ENCODE measurements at regions of chr19 and their contacts with region 1.

Region 1: DNA sequence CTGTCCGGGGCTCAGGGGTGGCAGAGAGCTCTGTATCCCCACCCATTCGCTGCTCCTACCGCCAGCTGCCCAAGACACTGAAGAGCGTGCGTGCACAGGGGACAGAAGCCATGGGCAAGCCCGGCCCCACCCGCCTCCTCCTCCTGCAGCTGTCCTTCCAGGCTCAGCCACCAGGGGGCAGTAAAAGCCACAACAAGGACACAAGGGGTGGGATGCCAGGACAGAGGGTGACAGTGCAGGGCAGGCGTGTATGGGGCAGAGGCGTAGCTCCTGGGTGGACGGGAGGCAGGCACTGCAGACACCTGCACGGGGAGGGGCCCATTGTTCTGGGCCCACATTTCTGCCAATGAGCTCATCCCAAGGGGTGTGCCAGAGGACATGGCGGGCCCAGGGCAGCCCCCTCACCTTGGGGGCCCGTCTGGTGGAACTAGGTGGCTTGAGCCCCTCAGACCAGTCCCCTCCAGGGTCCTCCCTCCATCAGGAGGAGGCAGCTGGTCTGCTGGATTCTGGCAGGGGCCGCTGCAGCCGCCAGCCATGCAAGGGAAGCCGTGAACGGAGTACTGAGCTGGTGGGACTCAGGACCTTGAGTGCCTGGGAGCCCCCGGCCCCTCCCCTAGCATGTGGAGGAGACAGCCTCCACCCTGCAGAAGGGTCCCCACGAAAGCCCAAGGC is 61.1 kb downstream of the MLLT1 start:
- DNase-seq: peak; percentile 51
- ATAC-seq: peak; percentile 89
- H3K4me3 ChIP-seq: no peak overlapping the region
- H3K27ac ChIP-seq: no peak overlapping the region
- H3K4me1 ChIP-seq: peaks cover 0 to 8% of the 10 kb centered on the region in 2 experiments; a peak in 1 of 4 replicates
- H3K27me3 ChIP-seq: no peaks in the 10 kb centered on the region
- CTCF ChIP-seq: peak; percentile 78 to 95 (median 88); a peak in 5 of 6 replicates
- POLR2A ChIP-seq: no peak
- RAD21 ChIP-seq: peak; percentile 82

Region 2: GRCh38 chr19:5967994-5968430 is 250.6 kb before region 1 on chr19:
- CTCF ChIA-PET with region 1: no interaction called
- POLR2A ChIA-PET with region 1: no interaction called
- RAD21 ChIA-PET with region 1: no interaction called
- intact Hi-C with region 1: no loop called
- DNase-seq: peak; percentile 50
- ATAC-seq: peak; percentile 88
- H3K4me3 ChIP-seq: no peak overlapping the region
- H3K27ac ChIP-seq: peak overlapping the region; percentile 45
- H3K4me1 ChIP-seq: peaks cover 0 to 12% of the 10 kb centered on the region in 2 experiments; a peak in 2 of 4 replicates
- H3K27me3 ChIP-seq: no peaks in the 10 kb centered on the region
- CTCF ChIP-seq: peak; percentile 56 to 89 (median 86)
- POLR2A ChIP-seq: no peak
- RAD21 ChIP-seq: peak; percentile 63

Region 3: DNA sequence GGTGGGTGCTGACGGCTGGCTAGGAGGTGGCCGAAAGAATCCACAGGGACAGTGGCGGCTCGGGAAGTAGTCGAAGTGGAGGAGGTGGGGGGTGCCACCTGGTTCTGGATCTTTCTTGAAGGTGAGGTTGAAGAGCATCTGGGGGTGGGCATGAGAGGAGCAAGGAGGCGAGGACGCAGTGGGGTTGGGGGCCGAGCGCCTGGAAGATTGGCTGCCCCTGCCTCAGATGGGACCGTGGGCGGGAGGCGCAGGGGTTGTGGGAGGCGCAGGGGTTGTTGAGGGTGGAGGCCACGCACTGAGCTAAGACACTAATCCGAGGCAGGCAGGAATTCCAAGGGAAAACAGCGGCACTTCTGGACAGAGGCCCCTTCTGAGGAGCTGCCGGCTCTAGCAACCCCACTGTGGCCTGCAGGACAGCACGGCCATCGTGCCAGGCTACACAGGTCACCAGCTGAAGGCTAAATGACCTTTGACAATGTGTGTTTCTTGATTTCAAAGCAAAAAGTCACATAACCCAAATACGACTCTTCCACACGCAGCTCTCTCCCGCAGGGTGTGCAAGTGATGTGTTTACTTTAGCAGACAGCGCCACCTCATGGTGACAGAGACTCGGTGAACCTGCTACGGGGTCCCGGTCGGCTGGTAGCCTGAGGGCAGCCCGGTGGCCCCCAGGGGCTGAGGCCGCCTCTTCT is 196.6 kb before region 1 on chr19:
- CTCF ChIA-PET with region 1: no interaction called
- POLR2A ChIA-PET with region 1: no interaction called
- RAD21 ChIA-PET with region 1: no interaction called
- intact Hi-C with region 1: no loop called
- DNase-seq: peak; percentile 47
- ATAC-seq: peak; percentile 98
- H3K4me3 ChIP-seq: no peak overlapping the region
- H3K27ac ChIP-seq: no peak overlapping the region
- H3K4me1 ChIP-seq: peaks cover 0 to 6% of the 10 kb centered on the region in 2 experiments; a peak in 1 of 4 replicates
- H3K27me3 ChIP-seq: no peaks in the 10 kb centered on the region
- CTCF ChIP-seq: peak; percentile 74 to 85 (median 82)
- POLR2A ChIP-seq: no peak
- RAD21 ChIP-seq: peak; percentile 88

Region 4: DNA sequence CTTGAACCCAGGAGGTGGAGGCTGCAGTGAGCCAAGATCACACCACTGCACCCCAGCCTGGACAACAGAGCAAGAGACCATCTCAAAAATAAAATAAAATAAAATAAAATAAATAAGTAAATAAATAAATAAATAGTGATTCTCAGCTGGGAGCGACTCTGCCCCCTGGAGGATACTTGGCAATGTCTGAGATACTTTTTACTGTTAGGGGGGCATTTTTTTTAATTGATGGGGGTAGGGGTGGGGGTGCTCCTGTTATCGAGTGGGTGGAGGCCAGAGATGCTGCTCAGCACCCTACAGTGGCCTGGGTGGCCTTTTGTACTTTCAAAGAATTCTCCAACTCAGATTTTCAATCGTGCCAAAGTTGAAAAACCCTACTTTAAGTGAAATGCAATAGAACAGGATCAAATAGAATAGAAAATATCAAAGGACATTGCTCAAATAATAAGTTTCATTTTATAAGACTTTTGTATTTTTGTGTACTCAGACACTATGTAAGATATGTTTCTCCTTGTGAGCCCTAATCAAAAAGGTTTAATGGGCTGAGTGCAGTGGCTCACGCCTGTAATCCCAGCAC is 135.6 kb after region 1 on chr19:
- CTCF ChIA-PET with region 1: interaction called, 4 read pairs
- POLR2A ChIA-PET with region 1: no interaction called
- RAD21 ChIA-PET with region 1: no interaction called
- intact Hi-C with region 1: loop called (anchors 5 kb)
- DNase-seq: no peak
- ATAC-seq: peak; percentile 61
- H3K4me3 ChIP-seq: no peak overlapping the region
- H3K27ac ChIP-seq: no peak overlapping the region
- H3K4me1 ChIP-seq: peaks cover 0 to 8% of the 10 kb centered on the region in 2 experiments; a peak in 3 of 4 replicates
- H3K27me3 ChIP-seq: 0 out of 2 replicates have a peak, but pooled peaks cover under 1% of the 10 kb centered on the region
- CTCF ChIP-seq: peak; percentile 41 to 58 (median 56); a peak in 5 of 6 replicates
- POLR2A ChIP-seq: no peak
- RAD21 ChIP-seq: peak; percentile 45

Measured in HCT116 (cell line).